Thyroid gland (tissue), 4 donors: ENCODE measurements at regions of chr5 and their contacts with region 1.

Region 1: GRCh38 chr5:9544502-9545135 is 1.3 kb downstream of the SEMA5A start:
- DNase-seq: peak; percentile 76 to 85
- H3K4me3 ChIP-seq: peak overlapping the region in 2 of 3 donors; percentile 44 to 62
- H3K27ac ChIP-seq: peak overlapping the region in 2 of 3 donors; percentile 19 to 21
- H3K4me1 ChIP-seq: peaks cover 15 to 24% of the 10 kb centered on the region in 2 donors
- H3K27me3 ChIP-seq: no peaks in the 10 kb centered on the region
- CTCF ChIP-seq: peak; percentile 73 to 95 (median 80)
- POLR2A ChIP-seq: peak in 1 of 2 donors; percentile 11

Region 2: DNA sequence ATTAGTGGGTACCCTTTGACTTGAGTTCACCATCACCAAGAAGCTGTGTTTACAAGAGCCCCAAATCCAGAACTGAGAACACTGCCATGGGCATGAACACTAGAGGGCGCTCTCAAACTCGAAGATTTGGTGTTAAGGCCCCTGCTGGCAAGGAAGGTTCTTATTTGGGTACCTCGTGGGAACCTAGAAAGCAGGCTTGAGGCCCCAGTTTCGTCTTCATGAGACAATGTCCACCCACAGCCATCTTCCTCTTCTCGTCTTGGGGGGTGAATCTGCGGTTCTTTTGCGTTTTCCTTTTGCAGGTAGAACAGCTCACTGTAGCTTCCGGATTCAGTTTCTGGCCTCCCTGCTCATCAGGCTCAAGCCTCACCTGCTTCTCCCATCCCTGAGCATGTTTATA is 182.8 kb before region 1 on chr5:
- intact Hi-C with region 1: loop called (anchors 5 kb)
- DNase-seq: peak; percentile 50 to 56
- H3K4me3 ChIP-seq: no peak overlapping the region
- H3K27ac ChIP-seq: no peak overlapping the region
- H3K4me1 ChIP-seq: no peaks in the 10 kb centered on the region
- H3K27me3 ChIP-seq: no peaks in the 10 kb centered on the region
- CTCF ChIP-seq: peak; percentile 20 to 66 (median 40)
- POLR2A ChIP-seq: no peak